GM18951 (cell line): ENCODE measurements at regions of chr1 and their contacts with region 1.

Region 1: GRCh38 chr1:169546087-169546995 is 39.9 kb downstream of the F5 start:
- POLR2A ChIP-seq: no peak

Region 2: DNA sequence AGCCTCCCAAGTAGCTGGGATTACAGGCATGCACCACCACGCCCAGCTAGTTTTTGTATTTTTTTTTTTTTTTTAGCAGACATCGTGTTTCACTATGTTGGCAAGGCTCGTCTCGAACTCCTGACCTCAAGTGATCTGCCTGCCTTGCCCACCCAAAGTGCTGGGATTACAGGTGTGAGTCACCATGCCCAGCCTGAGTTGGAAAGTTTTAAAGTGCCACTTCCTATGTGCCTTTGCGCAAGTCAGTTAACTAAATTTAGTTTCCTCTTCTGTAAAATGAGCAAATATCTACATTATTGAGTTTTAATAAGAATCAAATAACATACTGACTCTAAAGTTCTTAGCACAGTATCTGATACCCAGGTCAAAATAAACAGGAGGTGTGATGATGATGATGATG is 73.0 kb before region 1 on chr1:
- in situ Hi-C with region 1: loop called (anchors 10 kb)
- POLR2A ChIP-seq: no peak

Region 3: DNA sequence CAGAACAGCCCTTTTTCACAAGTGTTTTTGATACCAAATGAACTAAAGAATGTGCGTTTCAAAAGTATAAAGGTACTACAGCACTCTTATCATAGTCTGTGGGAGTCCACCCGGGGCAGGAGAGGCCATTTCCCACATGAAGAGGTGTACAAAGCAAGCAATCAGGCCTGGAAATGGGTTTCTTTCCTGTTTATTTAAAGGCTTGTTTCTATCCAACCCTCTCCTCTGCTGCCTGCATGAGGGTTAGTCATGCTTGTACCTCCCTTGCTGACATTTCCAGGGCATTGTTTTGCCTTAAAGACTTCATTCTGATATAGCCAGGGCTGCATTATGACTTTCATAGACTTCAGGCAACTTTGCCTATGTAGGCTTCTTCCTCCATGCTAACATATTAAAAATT is 72.0 kb after region 1 on chr1:
- in situ Hi-C with region 1: no loop called
- POLR2A ChIP-seq: no peak